Cardiac septum (tissue), 1 donor: ENCODE measurements at regions of chr6 and their contacts with region 1.

Region 1: DNA sequence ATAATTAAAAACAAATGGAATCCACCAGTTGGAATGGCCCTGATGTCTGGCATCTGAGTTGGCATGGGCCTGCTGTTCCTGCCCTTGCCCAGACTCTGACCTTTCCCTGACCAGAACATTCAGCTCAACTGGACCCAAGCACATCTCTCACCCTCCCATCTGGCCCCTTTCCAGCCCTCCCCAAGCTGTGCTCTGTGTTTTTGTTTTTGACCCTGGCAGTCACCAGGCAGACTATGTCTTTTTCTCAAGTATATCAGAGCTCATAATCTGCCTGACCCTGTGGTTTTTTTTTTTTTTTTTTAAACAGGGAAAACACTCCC is 117.6 kb downstream of the TRDN start:
- DNase-seq: peak; percentile 91

Region 2: GRCh38 chr6:123352279-123352678 is 166.9 kb before region 1 on chr6:
- intact Hi-C with region 1: no loop called
- DNase-seq: no peak

Region 3: DNA sequence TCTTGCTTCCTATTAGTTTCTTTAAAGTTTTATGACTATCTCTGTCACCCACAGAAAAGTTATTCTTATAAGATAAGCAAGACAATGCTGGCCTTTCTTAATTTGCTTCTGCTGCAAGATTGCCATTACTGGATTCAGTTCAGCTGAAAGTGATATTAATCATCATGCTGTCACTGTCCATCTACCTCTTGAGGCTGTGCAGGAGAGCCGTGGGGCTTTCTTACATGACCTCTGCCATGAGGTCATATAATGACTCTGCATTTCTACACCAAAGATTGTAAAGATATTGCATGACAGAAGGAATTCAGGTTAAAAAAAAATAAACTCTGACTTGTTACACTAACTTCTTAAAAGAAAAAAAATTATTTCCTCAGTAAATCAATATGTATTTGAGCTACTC is 10.7 kb after region 1 on chr6:
- intact Hi-C with region 1: loop called (anchors 2 kb)
- DNase-seq: no peak